HepG2 (cell line): ENCODE measurements at regions of chr22 and their contacts with region 1.

Region 1: DNA sequence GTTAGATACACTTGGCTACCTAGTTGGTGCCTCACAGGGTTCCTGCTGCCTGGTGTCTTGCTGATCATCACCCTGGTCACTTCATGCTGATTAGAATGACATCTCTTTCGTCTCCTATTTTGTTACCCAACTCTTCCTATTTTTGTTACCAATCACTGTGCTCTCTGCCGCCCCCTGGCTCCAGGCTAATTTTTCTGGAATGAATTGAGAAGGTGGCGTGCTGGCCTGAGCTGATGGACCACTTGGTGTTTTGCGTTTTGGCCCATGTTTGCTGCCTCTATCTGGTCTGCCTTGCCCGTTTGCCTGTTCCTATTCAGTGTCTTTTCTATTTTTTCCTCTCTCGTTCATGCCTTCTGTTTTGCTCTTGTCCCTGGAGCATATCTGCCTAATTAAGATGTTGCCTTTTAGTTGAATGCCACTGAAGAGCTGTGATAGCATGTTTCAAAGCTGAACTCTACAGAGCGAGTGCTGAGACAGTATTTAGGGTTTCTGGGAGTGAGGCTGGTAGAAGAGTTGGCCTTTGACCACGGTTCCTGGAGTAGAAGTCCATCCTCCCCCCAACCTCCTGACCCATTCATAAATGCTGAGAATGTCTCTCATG is 5.9 kb upstream of the ATF4 start:
- DNase-seq: no peak
- ATAC-seq: peak; percentile 28
- H3K4me3 ChIP-seq: no peak overlapping the region
- H3K27ac ChIP-seq: no peak overlapping the region
- H3K4me1 ChIP-seq: peaks cover 19% of the 10 kb centered on the region
- H3K27me3 ChIP-seq: no peaks in the 10 kb centered on the region
- CTCF ChIP-seq: peak; percentile 68
- EP300 ChIP-seq: no peak
- POLR2A ChIP-seq: no peak
- RAD21 ChIP-seq: peak; percentile 28; the same call in 1 of the 2 replicates

Region 2: GRCh38 chr22:39254789-39255298 is 259.6 kb before region 1 on chr22:
- CTCF ChIA-PET with region 1: no interaction called
- POLR2A ChIA-PET with region 1: no interaction called
- in situ Hi-C with region 1: no loop called
- intact Hi-C with region 1: no loop called
- DNase-seq: no peak
- ATAC-seq: peak; percentile 17; the same call in 2 of the 3 replicates
- H3K4me3 ChIP-seq: peak overlapping the region in 2 of 3 experiments; percentile 15 to 47; a peak in 2 of 6 replicates
- H3K27ac ChIP-seq: no peak overlapping the region
- H3K4me1 ChIP-seq: peaks cover 82% of the 10 kb centered on the region
- H3K27me3 ChIP-seq: peaks cover 9 to 38% of the 10 kb centered on the region in 2 experiments; a peak in 4 of 5 replicates
- CTCF ChIP-seq: no peak
- EP300 ChIP-seq: no peak
- POLR2A ChIP-seq: no peak
- RAD21 ChIP-seq: no peak

Region 3: DNA sequence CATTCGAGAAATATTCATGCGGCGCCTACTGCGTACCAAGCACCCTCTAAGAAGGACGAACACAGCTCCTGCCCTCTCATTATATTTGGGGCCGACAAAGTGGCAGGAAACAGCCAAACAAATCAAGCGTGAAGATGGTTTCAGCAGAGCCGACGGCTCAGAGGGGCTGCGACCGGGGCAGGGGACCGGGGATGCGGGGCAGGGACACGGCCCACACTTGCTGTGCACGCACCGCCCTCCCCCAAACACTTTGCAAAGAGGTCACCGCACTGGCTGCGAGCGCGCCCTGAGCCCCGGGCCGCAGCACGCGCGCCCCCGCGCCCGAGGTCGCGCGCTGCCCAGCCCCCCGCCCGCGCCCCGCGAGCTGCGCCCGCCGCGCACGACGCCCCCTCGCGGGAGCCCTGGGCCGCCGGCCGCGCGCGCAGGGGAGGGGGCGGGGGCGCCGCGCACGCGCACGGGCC is 164.9 kb before region 1 on chr22:
- CTCF ChIA-PET with region 1: no interaction called
- POLR2A ChIA-PET with region 1: no interaction called
- in situ Hi-C with region 1: no loop called
- intact Hi-C with region 1: no loop called
- DNase-seq: no peak
- ATAC-seq: peak; percentile 20; the same call in 1 of the 3 replicates
- H3K4me3 ChIP-seq: peak overlapping the region; percentile 42 to 79 (median 63)
- H3K27ac ChIP-seq: no peak overlapping the region
- H3K4me1 ChIP-seq: peaks cover 22% of the 10 kb centered on the region
- H3K27me3 ChIP-seq: peaks cover 12 to 27% of the 10 kb centered on the region in 2 experiments
- CTCF ChIP-seq: no peak
- EP300 ChIP-seq: no peak
- POLR2A ChIP-seq: no peak
- RAD21 ChIP-seq: no peak

Region 4: DNA sequence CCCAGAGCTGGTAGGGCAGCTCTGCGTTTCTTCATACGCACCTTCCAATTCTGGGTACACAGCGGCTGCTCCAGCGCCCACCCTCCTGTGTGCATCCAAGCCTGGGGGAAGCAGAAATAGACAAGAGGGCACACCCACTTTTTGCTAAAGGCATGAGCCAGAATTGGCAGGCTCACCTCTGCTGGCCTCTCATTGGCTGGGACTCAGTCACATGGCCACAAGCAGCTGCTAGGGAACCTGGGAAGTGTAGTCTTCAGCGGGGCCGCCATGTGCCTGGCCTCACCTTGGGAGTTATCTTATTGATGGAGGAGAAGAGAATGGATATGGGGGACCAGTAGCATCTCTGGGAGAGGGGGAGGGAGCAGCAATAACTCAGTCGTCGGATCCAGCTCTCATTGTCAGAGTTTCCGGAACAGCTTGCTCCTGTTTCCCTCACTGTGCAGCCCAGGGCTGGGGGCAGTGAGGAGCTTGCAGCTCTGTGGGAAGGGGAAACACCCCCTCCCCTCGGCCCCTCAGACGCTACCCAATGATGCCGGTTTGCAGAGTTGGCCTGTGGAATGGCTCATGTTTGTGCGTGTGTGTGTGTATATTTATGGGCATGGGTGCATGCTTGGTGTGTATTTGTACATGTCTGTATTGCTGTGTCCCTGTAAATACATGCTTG is 24.2 kb before region 1 on chr22:
- CTCF ChIA-PET with region 1: interaction called, 12 read pairs
- POLR2A ChIA-PET with region 1: interaction called, 7 read pairs
- in situ Hi-C with region 1: no loop called
- intact Hi-C with region 1: no loop called
- DNase-seq: peak; percentile 62
- ATAC-seq: peak; percentile 89
- H3K4me3 ChIP-seq: peak overlapping the region in 1 of 3 experiments; percentile 9; a peak in 1 of 6 replicates
- H3K27ac ChIP-seq: no peak overlapping the region
- H3K4me1 ChIP-seq: peaks cover 21% of the 10 kb centered on the region
- H3K27me3 ChIP-seq: peaks cover 0 to 2% of the 10 kb centered on the region in 2 experiments; a peak in 1 of 5 replicates
- CTCF ChIP-seq: no peak
- EP300 ChIP-seq: no peak
- POLR2A ChIP-seq: no peak
- RAD21 ChIP-seq: no peak

Region 5: DNA sequence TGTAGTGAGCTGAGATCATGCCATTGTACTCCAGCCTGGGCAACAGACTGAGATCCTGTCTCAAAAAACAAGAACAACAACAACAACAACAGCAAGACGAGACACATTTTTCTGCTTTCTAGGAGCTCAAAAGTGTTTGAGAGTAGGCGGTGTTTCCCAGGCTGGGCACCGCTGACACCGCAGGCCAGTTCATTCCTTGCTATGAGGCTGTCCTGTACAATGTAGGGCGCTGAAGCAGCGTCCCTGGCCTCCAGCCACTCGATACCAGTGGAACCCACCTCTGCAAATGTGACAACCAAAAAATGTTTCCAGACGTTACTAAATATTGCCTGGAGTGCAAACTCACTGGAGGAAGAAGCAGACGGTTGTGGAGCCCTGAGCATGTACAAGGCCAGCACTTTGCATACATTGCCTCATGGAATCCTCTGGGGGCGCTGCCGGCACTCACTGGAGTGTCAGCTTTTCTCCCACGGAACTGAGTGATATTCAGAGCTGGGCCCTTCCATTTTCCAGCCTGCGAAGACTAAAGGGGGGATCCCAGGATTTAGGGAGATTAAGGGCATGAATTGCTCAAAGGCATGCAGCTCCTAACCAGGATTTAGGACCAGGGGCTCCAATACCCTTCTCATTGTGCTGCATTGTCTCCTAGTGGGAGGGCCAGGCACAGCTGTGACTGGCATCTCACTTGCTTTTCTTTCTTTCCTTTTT is 18.2 kb before region 1 on chr22:
- CTCF ChIA-PET with region 1: interaction called, 12 read pairs
- POLR2A ChIA-PET with region 1: interaction called, 118 read pairs
- in situ Hi-C with region 1: no loop called
- intact Hi-C with region 1: loop called (anchors 1 kb)
- DNase-seq: peak; percentile 74
- ATAC-seq: peak; percentile 88
- H3K4me3 ChIP-seq: peak overlapping the region in 1 of 3 experiments; percentile 57; a peak in 2 of 6 replicates
- H3K27ac ChIP-seq: no peak overlapping the region
- H3K4me1 ChIP-seq: peaks cover 51% of the 10 kb centered on the region
- H3K27me3 ChIP-seq: peaks cover 0 to 2% of the 10 kb centered on the region in 2 experiments; a peak in 1 of 5 replicates
- CTCF ChIP-seq: peak; percentile 84
- EP300 ChIP-seq: no peak
- POLR2A ChIP-seq: no peak
- RAD21 ChIP-seq: 0 out of 2 replicates have a peak, but pooled peaks have one; percentile 18

Region 6: DNA sequence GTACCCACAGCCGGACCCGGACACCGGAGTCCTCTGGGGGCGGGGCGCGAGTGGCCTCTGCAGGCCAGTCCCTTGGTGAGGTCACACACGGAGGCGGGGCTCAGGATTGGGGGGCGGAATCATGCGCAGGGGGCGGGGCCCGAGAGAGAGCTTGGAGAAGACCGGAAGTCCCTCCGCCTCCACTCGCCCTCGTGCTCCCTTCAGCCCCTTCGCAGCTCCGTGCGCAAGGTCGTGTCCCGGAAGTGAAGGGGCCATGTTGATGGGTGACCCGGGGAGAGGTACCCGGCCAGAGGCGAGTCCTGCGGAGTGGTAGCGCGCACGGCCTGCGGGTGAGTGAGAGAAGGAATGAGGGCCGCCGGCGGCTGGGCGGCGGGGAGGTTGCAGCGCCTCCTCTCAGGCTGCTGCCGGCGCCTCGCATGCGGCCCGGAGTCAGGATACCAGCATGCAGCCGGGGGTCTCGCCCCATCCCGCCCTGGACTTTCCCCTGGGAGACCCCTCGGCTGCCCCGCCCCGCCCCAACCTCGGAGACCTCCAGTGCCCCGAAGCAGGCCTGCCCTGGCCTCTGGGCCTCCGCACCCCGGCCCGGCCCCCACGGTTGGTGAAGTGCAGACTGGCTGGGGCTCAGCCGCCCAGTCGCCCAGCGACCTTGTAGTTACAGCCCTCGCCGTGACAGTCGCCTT is 12.2 kb before region 1 on chr22 and contains the start of gene MIEF1:
- CTCF ChIA-PET with region 1: no interaction called
- POLR2A ChIA-PET with region 1: interaction called, 118 read pairs
- in situ Hi-C with region 1: no loop called
- intact Hi-C with region 1: no loop called
- DNase-seq: peak; percentile 96
- ATAC-seq: peak; percentile 95
- H3K4me3 ChIP-seq: peak within 1 kb of the TSS; percentile 80 to 93 (median 91)
- H3K27ac ChIP-seq: peak within 1 kb of the TSS; percentile 94
- H3K4me1 ChIP-seq: peaks cover 64% of the 10 kb centered on the region
- H3K27me3 ChIP-seq: no peaks in the 10 kb centered on the region
- CTCF ChIP-seq: no peak; the same call in 1 of the 2 replicates
- EP300 ChIP-seq: no peak
- POLR2A ChIP-seq: peak; percentile 71 to 85
- RAD21 ChIP-seq: no peak
- total RNA-seq, gene MIEF1: 34.8 and 41.4 TPM in 2 replicates

Region 7: GRCh38 chr22:39723899-39724351 is 209.5 kb after region 1 on chr22:
- CTCF ChIA-PET with region 1: no interaction called
- POLR2A ChIA-PET with region 1: no interaction called
- in situ Hi-C with region 1: no loop called
- intact Hi-C with region 1: no loop called
- DNase-seq: peak; percentile 6
- ATAC-seq: no peak
- H3K4me3 ChIP-seq: no peak overlapping the region
- H3K27ac ChIP-seq: no peak overlapping the region
- H3K4me1 ChIP-seq: no peaks in the 10 kb centered on the region
- H3K27me3 ChIP-seq: peaks cover 0 to 24% of the 10 kb centered on the region in 2 experiments; a peak in 2 of 5 replicates
- CTCF ChIP-seq: no peak
- EP300 ChIP-seq: no peak
- POLR2A ChIP-seq: no peak
- RAD21 ChIP-seq: no peak